ENCODE measurements at regions of chr5 and their contacts with region 1.

Region 1: GRCh38 chr5:13529300-13529699 is 415.2 kb downstream of the DNAH5 start:
- DNase-seq: no peak
- ATAC-seq: no peak
- H3K4me3 ChIP-seq: no peak overlapping the region
- H3K27ac ChIP-seq: no peak overlapping the region
- H3K4me1 ChIP-seq: no peaks in the 10 kb centered on the region
- H3K27me3 ChIP-seq: no peaks in the 10 kb centered on the region
- CTCF ChIP-seq: no peak

Region 2: GRCh38 chr5:14134083-14134482 is 604.8 kb after region 1 on chr5:
- CTCF ChIA-PET with region 1: no interaction called
- POLR2A ChIA-PET with region 1: interaction called, 10 read pairs
- intact Hi-C with region 1: no loop called
- DNase-seq: no peak
- ATAC-seq: no peak
- H3K4me3 ChIP-seq: no peak overlapping the region
- H3K27ac ChIP-seq: no peak overlapping the region
- H3K4me1 ChIP-seq: no peaks in the 10 kb centered on the region
- H3K27me3 ChIP-seq: no peaks in the 10 kb centered on the region
- CTCF ChIP-seq: no peak